ENCODE measurements at regions of chr6 and their contacts with region 1.

Region 1: DNA sequence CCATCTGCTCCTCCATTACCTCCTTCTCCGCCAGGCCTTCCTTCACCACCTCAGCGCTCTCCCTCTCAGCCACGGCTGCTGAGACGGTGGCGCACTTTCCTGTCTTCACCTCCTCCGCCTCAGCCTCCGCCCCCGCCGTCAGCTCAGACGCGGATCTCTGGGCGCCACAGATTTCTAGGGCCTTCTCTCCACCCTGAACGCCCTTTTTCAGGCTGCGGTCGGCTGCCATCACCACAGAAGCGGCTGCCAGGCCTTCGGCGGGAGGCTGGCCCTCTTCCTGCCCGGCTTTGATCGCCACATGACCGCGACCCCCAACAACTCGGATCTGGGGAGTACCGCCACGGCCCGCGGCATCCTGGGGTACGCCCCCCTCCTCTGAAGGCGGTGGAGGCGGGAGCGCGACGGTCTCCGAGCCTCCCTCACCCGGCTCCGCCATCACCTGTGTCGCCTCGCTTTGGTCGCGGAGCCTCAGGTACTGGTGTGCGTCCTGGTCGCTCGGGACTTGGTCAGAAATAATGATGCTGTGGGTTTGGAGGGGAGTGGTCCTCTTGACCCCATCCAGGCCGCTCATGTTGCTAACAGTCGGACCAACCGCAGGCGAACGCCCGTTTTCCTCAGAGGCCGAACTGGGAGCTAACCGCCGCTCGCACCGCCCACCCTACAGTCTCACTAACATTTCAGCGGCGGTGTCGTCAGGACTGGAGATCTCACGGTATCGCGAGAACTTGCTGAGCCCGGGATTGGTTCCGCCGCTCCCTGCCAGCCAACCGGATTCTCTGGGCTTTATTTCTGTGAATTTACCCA is at the start of gene TSPYL1:
- DNase-seq: peak; percentile 85 to 98 (median 96)
- ATAC-seq: peak; percentile 92
- H3K4me3 ChIP-seq: peak within 1 kb of the TSS; percentile 86
- H3K4me3 Mint-ChIP-seq: peak within 1 kb of the TSS; percentile 96 to 100 (median 98)
- H3K27ac ChIP-seq: peak within 1 kb of the TSS; percentile 99
- H3K27ac Mint-ChIP-seq: peak within 1 kb of the TSS; percentile 98 to 100 (median 100)
- H3K4me1 ChIP-seq: peaks cover 39 to 43% of the 10 kb centered on the region in 2 donors
- H3K4me1 Mint-ChIP-seq: peaks cover 37 to 73% (median 54%) of the 10 kb centered on the region in 7 donors
- H3K27me3 ChIP-seq: no peaks in the 10 kb centered on the region
- H3K27me3 Mint-ChIP-seq: peaks cover 0 to 6% (median 0%) of the 10 kb centered on the region in 5 donors
- total RNA-seq, gene TSPYL1: 42.8 to 226 (median 104) TPM

Region 2: GRCh38 chr6:116253505-116254296 is 25.8 kb before region 1 on chr6 and contains the start of gene TSPYL4:
- CTCF ChIA-PET with region 1: interaction called, 3 read pairs
- POLR2A ChIA-PET with region 1: interaction called, 67 read pairs
- intact Hi-C with region 1: loop called (anchors 1 kb)
- DNase-seq: peak; percentile 76 to 96 (median 91)
- ATAC-seq: peak; percentile 97
- H3K4me3 ChIP-seq: peak within 1 kb of the TSS; percentile 80
- H3K4me3 Mint-ChIP-seq: no peak within 1 kb of the TSS
- H3K27ac ChIP-seq: peak within 1 kb of the TSS; percentile 97
- H3K27ac Mint-ChIP-seq: no peak within 1 kb of the TSS
- H3K4me1 ChIP-seq: peaks cover 27 to 36% of the 10 kb centered on the region in 2 donors
- H3K4me1 Mint-ChIP-seq: peaks cover 3 to 43% (median 27%) of the 10 kb centered on the region in 7 donors
- H3K27me3 ChIP-seq: no peaks in the 10 kb centered on the region
- H3K27me3 Mint-ChIP-seq: no peaks in the 10 kb centered on the region
- total RNA-seq, gene TSPYL4: 18.2 to 58.2 (median 21.5) TPM

Region 3: DNA sequence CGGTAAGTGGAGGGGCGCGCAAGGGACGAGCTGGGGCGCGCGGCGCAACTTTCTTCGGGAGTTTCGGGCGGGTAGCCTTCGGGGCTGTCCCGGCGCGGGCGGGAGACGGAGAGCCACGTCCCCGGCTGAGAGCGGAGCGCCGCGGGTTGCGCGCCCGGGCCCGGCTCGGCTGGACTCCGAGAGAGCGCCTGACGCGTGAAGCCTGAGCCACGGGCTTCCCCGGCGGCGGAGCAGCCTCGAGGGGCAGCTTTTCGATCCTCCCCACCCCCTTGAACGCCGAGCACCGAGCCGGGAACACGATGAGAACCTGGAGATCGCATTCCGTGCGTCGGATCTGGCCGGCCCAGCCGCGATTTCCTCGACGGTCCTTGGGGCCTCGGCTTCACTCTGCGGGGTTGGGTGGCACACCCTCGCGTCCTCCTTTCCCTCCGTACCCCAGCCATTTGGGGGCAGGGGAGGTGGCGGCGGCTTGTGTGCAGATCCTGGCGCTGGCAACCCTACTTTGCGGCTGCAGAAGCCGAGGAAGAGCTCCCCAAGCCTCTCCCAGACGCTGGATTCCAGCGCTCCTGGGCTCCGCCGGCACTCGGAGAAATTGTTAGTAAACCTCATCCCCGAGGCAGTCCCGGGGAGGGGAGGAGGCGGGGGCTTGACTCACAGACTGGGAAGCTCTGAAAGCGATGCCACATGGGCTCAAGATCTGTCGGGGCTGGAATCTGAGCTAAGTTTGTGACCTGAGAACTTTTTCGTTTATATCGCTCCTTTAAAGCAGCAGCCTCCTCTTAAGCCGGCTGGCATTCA is 91.9 kb after region 1 on chr6:
- CTCF ChIA-PET with region 1: no interaction called
- POLR2A ChIA-PET with region 1: no interaction called
- intact Hi-C with region 1: loop called in 1 of 2 experiments (anchors 2 kb)
- DNase-seq: peak in 8 of 9 donors; percentile 1 to 49 (median 27)
- ATAC-seq: peak; percentile 59
- H3K4me3 ChIP-seq: peak overlapping the region; percentile 64
- H3K4me3 Mint-ChIP-seq: peak overlapping the region; percentile 76 to 93 (median 86)
- H3K27ac ChIP-seq: no peak overlapping the region
- H3K27ac Mint-ChIP-seq: no peak overlapping the region
- H3K4me1 ChIP-seq: peaks cover 9 to 10% of the 10 kb centered on the region in 2 donors
- H3K4me1 Mint-ChIP-seq: peaks cover 9 to 18% (median 11%) of the 10 kb centered on the region in 7 donors
- H3K27me3 ChIP-seq: no peaks in the 10 kb centered on the region
- H3K27me3 Mint-ChIP-seq: peaks cover 5 to 71% (median 23%) of the 10 kb centered on the region in 5 donors

Region 4: DNA sequence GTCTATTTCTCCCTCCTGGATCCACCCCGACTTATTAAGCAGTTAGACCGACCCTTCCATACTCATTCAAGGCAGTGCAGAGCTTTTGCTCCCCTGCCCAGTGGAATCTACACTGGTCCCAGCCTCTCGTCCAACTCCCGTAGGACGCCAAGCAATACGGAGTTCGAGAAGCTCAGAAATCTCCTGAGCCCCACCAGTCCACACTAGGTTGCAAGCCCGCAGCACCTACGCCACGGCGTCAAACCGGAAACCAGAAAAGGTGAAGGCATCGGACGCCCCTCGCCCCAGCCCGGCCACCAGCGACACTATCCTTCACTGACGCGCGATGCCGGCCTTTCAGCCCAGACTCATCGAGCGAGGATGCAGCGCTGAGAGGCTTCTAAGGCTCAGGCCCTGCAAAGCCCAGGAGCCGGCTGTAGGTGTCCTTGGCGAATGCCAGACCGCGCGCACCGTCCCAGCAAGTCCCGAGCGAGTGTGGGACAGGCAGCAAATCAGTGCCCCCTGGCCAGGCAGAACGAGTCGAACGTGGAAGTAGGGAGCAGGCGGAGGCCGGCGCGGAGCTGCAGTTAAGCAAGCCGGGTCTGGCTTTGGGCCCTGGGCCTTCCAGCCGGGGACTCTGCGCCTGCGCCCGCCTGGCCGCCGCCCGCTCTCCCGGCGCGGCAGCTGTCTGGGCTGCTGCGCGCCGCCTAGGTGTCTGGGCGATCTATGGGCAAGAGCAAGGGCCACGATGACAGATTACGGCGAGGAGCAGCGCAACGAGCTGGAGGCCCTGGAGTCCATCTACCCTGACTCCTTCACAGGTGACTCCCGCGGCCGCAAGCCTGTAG is 291.6 kb after region 1 on chr6 and contains the start of gene RWDD1:
- CTCF ChIA-PET with region 1: no interaction called
- POLR2A ChIA-PET with region 1: interaction called, 70 read pairs
- intact Hi-C with region 1: loop called (anchors 1 kb)
- DNase-seq: peak; percentile 91 to 99 (median 98)
- ATAC-seq: peak; percentile 98
- H3K4me3 ChIP-seq: peak within 1 kb of the TSS; percentile 86
- H3K4me3 Mint-ChIP-seq: peak within 1 kb of the TSS; percentile 94 to 99 (median 98)
- H3K27ac ChIP-seq: peak within 1 kb of the TSS; percentile 95
- H3K27ac Mint-ChIP-seq: peak within 1 kb of the TSS; percentile 96 to 100 (median 99)
- H3K4me1 ChIP-seq: peaks cover 16 to 21% of the 10 kb centered on the region in 2 donors
- H3K4me1 Mint-ChIP-seq: peaks cover 33 to 62% (median 55%) of the 10 kb centered on the region in 7 donors
- H3K27me3 ChIP-seq: no peaks in the 10 kb centered on the region
- H3K27me3 Mint-ChIP-seq: peaks cover 0 to 11% (median 0%) of the 10 kb centered on the region in 5 donors
- total RNA-seq, gene RWDD1: 33.2 to 39.9 (median 36.7) TPM